Heart right ventricle (tissue), 16 donors: ENCODE measurements at regions of chr1 and their contacts with region 1.

Region 1: DNA sequence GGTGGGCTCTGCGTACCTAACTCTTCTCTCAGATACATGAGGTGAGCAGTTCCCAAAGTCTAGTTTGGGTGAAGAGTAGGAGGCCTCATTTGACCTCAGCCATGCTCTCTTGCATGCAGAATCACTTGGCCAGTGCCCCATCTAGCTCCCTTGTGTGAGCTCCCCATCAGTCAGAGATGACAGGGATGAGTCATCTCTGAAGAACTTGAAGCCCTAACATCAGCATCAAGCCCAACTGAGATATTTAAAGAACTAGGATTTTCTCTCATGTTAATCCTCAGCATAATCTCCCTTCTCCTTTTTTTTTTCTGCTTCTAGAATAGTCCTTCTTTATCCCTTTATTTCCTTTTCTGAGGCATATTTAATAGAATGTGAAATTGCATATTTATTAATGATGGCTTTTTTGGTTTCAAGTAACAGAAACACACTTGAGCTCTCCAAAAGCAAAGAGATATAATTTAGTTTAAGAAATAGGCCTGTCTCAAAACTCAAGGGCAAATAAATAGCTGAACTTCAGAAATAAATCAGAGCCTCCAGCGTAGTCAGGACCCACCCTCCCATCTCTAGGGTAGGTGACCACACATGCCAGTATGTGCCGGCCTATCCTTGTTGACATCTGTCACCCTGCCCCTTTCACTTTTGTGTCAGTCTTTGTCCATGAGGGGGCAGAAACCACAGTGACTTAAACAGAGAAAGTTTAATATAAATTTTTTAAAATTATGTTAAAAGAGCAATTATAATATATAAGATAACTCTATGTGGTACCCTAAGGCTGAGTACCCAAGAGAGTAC is 112.3 kb downstream of the TSEN15 start:
- DNase-seq: no peak
- ATAC-seq: peak in 6 of 8 donors; percentile 20 to 89 (median 55)
- H3K4me3 ChIP-seq: no peak overlapping the region
- H3K27ac ChIP-seq: peak overlapping the region in 2 of 10 donors; percentile 39 to 42
- H3K4me1 ChIP-seq: peaks cover 0 to 68% (median 19%) of the 10 kb centered on the region in 9 donors
- H3K27me3 ChIP-seq: no peaks in the 10 kb centered on the region
- CTCF ChIP-seq: no peak

Region 2: GRCh38 chr1:183841950-183842794 is 321.7 kb before region 1 on chr1:
- intact Hi-C with region 1: no loop called
- DNase-seq: peak in 1 of 2 donors; percentile 32
- ATAC-seq: peak; percentile 72 to 92 (median 84)
- H3K4me3 ChIP-seq: peak overlapping the region in 7 of 10 donors; percentile 2 to 27 (median 10)
- H3K27ac ChIP-seq: peak overlapping the region; percentile 34 to 84 (median 58)
- H3K4me1 ChIP-seq: peaks cover 3 to 66% (median 41%) of the 10 kb centered on the region in 9 donors
- H3K27me3 ChIP-seq: no peaks in the 10 kb centered on the region
- CTCF ChIP-seq: no peak

Region 3: GRCh38 chr1:184199438-184200085 is 35.7 kb after region 1 on chr1:
- intact Hi-C with region 1: loop called in 1 of 10 experiments (anchors 5 kb)
- DNase-seq: no peak
- ATAC-seq: no peak
- H3K4me3 ChIP-seq: no peak overlapping the region
- H3K27ac ChIP-seq: no peak overlapping the region
- H3K4me1 ChIP-seq: peaks cover 0 to 3% (median under 1%) of the 10 kb centered on the region in 9 donors
- H3K27me3 ChIP-seq: no peaks in the 10 kb centered on the region
- CTCF ChIP-seq: no peak

Region 4: DNA sequence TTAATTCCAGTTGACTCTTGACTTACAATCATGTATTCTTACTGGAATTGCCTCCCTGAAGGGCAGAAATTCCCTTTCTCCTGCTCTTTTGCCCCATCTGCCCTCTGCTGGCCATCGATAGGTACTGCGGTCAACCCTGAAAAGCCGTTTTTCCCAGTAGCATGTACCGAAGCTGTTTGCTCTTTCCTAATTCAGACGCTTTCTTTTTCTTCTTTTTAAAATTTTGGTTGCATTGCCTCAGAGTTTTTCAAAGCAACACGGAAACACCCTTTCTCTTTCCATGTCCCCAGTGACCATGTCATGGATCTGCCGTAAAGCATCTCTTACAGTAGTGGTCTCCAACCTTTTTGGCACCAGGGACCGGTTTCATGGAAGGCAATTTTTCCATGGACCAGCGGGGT is 58.8 kb after region 1 on chr1:
- intact Hi-C with region 1: loop called in 1 of 10 experiments (anchors 5 kb)
- DNase-seq: peak; percentile 48 to 56
- ATAC-seq: peak; percentile 46 to 76 (median 65)
- H3K4me3 ChIP-seq: peak overlapping the region in 9 of 10 donors; percentile 12 to 49 (median 37)
- H3K27ac ChIP-seq: peak overlapping the region in 5 of 10 donors; percentile 4 to 37 (median 28)
- H3K4me1 ChIP-seq: peaks cover 0 to 8% (median 4%) of the 10 kb centered on the region in 9 donors
- H3K27me3 ChIP-seq: no peaks in the 10 kb centered on the region
- CTCF ChIP-seq: peak; percentile 92 to 99 (median 96)

Region 5: GRCh38 chr1:184296466-184297243 is 132.8 kb after region 1 on chr1:
- intact Hi-C with region 1: no loop called
- DNase-seq: peak; percentile 75 to 97
- ATAC-seq: peak; percentile 91 to 95 (median 94)
- H3K4me3 ChIP-seq: peak overlapping the region in 5 of 10 donors; percentile 6 to 26 (median 18)
- H3K27ac ChIP-seq: peak overlapping the region; percentile 57 to 95 (median 82)
- H3K4me1 ChIP-seq: peaks cover 16 to 74% (median 41%) of the 10 kb centered on the region in 9 donors
- H3K27me3 ChIP-seq: no peaks in the 10 kb centered on the region
- CTCF ChIP-seq: no peak

Region 6: DNA sequence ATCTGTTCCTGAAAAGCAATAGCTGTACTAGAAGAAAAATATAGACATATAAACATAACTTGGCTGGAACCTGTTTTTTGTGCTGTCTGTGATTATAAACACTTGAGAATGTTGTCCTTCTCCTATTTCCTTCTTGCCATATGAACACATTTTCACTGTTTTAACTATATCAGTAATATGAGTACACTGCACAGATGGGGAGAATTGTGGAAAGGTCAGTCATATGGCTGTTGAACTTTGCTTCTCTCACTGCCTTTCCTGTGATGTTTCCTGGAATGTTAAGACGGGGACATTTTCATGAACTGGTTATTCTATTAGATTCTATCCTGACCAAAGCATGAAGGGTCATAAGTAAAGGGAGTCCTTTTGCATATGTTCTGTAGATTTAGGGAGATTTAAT is 1595.2 kb after region 1 on chr1:
- intact Hi-C with region 1: no loop called
- DNase-seq: no peak
- ATAC-seq: no peak
- H3K4me3 ChIP-seq: no peak overlapping the region
- H3K27ac ChIP-seq: no peak overlapping the region
- H3K4me1 ChIP-seq: peaks cover 0 to 3% (median 0%) of the 10 kb centered on the region in 9 donors
- H3K27me3 ChIP-seq: no peaks in the 10 kb centered on the region
- CTCF ChIP-seq: no peak